Activated B cell treated with CpG ODN at 0.5 μM for 24 hours (primary cell): ENCODE measurements at regions of chr4 and their contacts with region 1.

Region 1: GRCh38 chr4:183722731-183723560 is 63.9 kb downstream of the TRAPPC11 start:
- DNase-seq: peak; percentile 34
- ATAC-seq: peak; percentile 64
- H3K4me3 Mint-ChIP-seq: peak overlapping the region; percentile 77
- H3K27ac Mint-ChIP-seq: peak overlapping the region; percentile 30
- H3K4me1 Mint-ChIP-seq: peaks cover 12% of the 10 kb centered on the region
- H3K27me3 Mint-ChIP-seq: peaks cover 6% of the 10 kb centered on the region
- CTCF ChIP-seq: no peak

Region 2: GRCh38 chr4:183659029-183659871 is 63.7 kb before region 1 on chr4 and contains the starts of genes RWDD4 and TRAPPC11:
- CTCF ChIA-PET with region 1: no interaction called
- POLR2A ChIA-PET with region 1: no interaction called
- intact Hi-C with region 1: loop called (anchors 1 kb)
- DNase-seq: peak; percentile 87
- ATAC-seq: peak; percentile 98
- H3K4me3 Mint-ChIP-seq: peak within 1 kb of the TSS; percentile 93
- H3K27ac Mint-ChIP-seq: peak within 1 kb of the TSS; percentile 92
- H3K4me1 Mint-ChIP-seq: peaks cover 33% of the 10 kb centered on the region
- H3K27me3 Mint-ChIP-seq: no peaks in the 10 kb centered on the region
- CTCF ChIP-seq: no peak
- total RNA-seq, gene RWDD4: 14.6 and 15.4 TPM in 2 replicates
- total RNA-seq, gene TRAPPC11: 42.9 and 45.2 TPM in 2 replicates

Region 3: GRCh38 chr4:184066584-184067300 is 343.8 kb after region 1 on chr4:
- CTCF ChIA-PET with region 1: no interaction called
- POLR2A ChIA-PET with region 1: no interaction called
- intact Hi-C with region 1: no loop called
- DNase-seq: no peak
- ATAC-seq: no peak
- H3K4me3 Mint-ChIP-seq: no peak overlapping the region
- H3K27ac Mint-ChIP-seq: no peak overlapping the region
- H3K4me1 Mint-ChIP-seq: no peaks in the 10 kb centered on the region
- H3K27me3 Mint-ChIP-seq: peaks cover 5% of the 10 kb centered on the region
- CTCF ChIP-seq: no peak